ENCODE measurements at regions of chr16 and their contacts with region 1.

Region 1: DNA sequence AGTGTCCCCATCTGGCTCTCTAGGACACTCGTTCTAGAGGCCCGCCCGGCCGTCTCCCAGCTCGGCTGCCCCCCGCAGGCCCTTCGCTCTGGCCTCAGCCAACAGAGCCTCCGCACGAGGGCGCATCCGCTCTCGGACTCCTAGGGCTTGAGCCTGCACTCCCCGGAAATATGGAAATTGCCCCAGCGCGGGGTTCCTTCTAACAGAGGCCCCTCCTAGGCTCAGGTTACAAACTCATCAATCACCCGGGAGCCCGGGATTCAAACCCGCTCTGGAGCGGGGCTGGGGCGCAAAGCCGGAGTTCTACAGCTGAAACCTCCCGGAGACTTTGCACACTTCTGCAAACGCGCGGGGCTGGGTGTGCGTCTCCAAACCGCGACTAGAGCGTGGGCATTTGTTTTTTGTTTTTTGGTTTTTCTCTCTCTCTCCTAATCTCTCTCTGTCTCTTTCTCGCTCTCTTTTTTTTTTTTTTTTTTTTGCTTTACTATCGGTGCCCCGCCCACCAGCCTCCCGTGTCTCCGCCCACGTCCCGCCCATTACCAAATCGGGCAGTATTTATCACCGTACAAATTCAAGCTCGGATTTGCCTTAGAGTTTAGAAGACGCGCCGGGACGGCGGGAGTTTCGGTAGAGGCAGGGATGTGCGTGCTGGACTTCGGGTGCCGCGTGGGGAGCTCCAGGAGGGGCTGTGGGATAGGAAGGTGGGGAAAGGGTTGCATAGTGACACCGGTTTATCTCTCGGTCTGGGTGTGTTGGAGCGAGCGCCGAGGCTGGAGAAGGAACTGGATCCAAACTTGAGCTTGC is 2.4 kb upstream of the FOXL1 start:
- DNase-seq: peak; percentile 80 to 90 (median 84)
- ATAC-seq: peak; percentile 77 to 86 (median 80)
- H3K4me3 ChIP-seq: peak overlapping the region; percentile 8 to 62 (median 47)
- H3K27ac ChIP-seq: peak overlapping the region; percentile 32 to 86 (median 68)
- H3K4me1 ChIP-seq: peaks cover 0 to 56% (median 11%) of the 10 kb centered on the region in 12 donors
- H3K27me3 ChIP-seq: peaks cover 28 to 98% (median 62%) of the 10 kb centered on the region in 9 donors
- CTCF ChIP-seq: peak; percentile 32 to 80 (median 57)
- POLR2A ChIP-seq: peak in 1 of 2 donors; percentile 71

Region 2: DNA sequence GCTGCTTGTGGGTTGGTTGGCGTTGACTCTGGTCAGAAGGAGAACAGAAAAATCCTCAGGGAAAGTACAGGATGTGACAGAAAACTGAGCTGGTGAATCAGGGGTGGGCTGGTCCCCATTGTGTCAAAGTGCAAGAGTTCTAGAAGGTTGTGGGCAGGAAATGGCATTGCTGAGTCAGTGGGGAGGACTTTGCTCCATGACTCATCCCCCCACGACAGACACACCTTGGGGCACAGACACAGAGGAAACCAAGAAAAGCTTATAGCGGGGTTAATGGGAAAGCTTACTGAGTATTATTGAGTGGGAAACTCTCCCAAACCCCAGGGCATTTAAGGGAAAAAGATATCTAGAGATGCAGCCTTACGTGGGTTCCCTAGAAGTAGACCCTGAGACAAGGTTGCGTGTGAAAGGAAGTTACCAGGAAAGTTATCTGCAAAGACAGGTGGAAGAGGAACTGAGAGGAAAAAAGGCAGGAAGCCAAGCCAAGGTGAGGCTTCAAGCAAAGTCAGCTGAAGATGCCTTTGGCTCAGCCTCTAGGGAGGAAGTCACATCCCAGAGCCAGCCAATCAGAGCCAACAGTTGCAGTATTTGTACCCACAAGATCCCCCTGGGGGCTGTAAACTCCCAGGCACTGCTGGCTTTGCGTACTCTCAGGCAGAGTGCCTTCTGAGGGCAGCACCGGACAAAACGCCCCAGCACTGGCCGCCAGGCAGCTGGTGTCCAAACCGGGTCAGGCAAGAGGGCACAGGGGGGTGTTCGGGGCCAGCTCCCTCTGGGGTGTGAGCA is 88.8 kb after region 1 on chr16:
- intact Hi-C with region 1: loop called in 6 of 10 experiments (anchors 5 to 10 kb)
- DNase-seq: peak in 1 of 5 donors; percentile 61
- ATAC-seq: peak in 3 of 4 donors; percentile 28 to 50 (median 50)
- H3K4me3 ChIP-seq: no peak overlapping the region
- H3K27ac ChIP-seq: peak overlapping the region in 6 of 12 donors; percentile 22 to 63 (median 45)
- H3K4me1 ChIP-seq: peaks cover 0 to 46% (median 12%) of the 10 kb centered on the region in 12 donors
- H3K27me3 ChIP-seq: peaks cover 0 to 18% (median under 1%) of the 10 kb centered on the region in 9 donors
- CTCF ChIP-seq: no peak
- POLR2A ChIP-seq: no peak

Region 3: GRCh38 chr16:86740906-86741799 is 165.2 kb after region 1 on chr16:
- intact Hi-C with region 1: loop called in 1 of 10 experiments (anchors 5 kb)
- DNase-seq: peak in 4 of 5 donors; percentile 75 to 80 (median 77)
- ATAC-seq: peak; percentile 76 to 97 (median 94)
- H3K4me3 ChIP-seq: peak overlapping the region in 11 of 12 donors; percentile 8 to 62 (median 46)
- H3K27ac ChIP-seq: peak overlapping the region; percentile 0 to 96 (median 76)
- H3K4me1 ChIP-seq: peaks cover 0 to 14% (median 2%) of the 10 kb centered on the region in 12 donors
- H3K27me3 ChIP-seq: peaks cover 0 to 8% (median 0%) of the 10 kb centered on the region in 9 donors
- CTCF ChIP-seq: no peak
- POLR2A ChIP-seq: no peak

Region 4: GRCh38 chr16:86761111-86762031 is 185.4 kb after region 1 on chr16:
- intact Hi-C with region 1: loop called in 9 of 10 experiments (anchors 5 to 10 kb)
- DNase-seq: peak; percentile 53 to 80 (median 64)
- ATAC-seq: peak; percentile 50 to 87 (median 79)
- H3K4me3 ChIP-seq: peak overlapping the region in 6 of 12 donors; percentile 5 to 42 (median 30)
- H3K27ac ChIP-seq: no peak overlapping the region
- H3K4me1 ChIP-seq: peaks cover 0 to 20% (median 4%) of the 10 kb centered on the region in 12 donors
- H3K27me3 ChIP-seq: peaks cover 0 to 65% (median 20%) of the 10 kb centered on the region in 9 donors
- CTCF ChIP-seq: peak; percentile 64 to 92 (median 76)
- POLR2A ChIP-seq: no peak

Region 5: DNA sequence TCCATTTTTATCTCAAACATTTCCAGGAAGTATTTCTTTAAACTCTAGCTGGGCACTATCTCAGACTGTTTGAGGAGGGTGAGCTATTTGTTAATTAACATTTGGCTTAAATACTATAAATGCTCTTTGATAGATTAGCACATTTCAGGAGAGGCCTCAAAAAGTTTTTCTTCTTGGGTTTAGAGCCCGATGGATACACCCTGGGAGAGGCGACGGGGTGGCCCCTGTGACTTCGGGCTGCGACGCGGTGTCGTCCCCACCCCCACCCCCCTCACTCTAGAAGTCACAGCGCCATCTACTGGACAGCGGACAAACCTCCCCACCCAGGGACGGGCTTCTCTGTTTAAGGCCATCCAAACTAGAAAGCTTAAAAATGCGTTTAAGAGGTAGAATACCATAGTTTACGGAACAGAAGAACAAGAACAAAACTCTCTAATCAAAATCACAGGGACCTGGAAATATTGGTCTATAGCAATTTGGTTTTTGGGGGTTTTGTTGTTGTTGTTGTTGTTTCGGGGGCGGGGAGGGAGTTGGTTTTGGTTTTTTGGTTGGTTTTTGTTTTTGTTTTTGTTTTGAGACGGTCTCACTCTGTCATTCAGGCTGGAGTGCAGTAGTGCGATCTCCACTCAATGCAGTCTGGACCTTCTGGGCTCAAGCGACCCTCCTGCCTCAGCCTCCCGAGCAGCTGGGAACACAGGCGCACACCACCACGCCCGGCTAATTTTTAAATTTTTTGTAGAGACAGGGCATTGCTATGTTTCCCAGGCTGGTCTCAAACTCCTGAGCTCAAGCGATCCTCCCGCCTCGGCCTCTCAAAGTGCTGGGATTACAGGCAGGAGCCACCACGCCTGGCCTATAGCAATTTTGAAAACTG is 486.9 kb after region 1 on chr16:
- intact Hi-C with region 1: loop called in 3 of 10 experiments (anchors 5 kb)
- DNase-seq: peak; percentile 66 to 82 (median 74)
- ATAC-seq: peak; percentile 88 to 93 (median 91)
- H3K4me3 ChIP-seq: peak overlapping the region in 6 of 12 donors; percentile 6 to 47 (median 22)
- H3K27ac ChIP-seq: no peak overlapping the region
- H3K4me1 ChIP-seq: peaks cover 0 to 7% (median 0%) of the 10 kb centered on the region in 12 donors
- H3K27me3 ChIP-seq: peaks cover 0 to 17% (median 7%) of the 10 kb centered on the region in 9 donors
- CTCF ChIP-seq: peak; percentile 70 to 85 (median 80)
- POLR2A ChIP-seq: no peak

Measured in heart left ventricle (tissue), 16 donors.